ENCODE measurements at regions of chr12 and their contacts with region 1.

Region 1: GRCh38 chr12:124453419-124454351 is 113.7 kb downstream of the NCOR2 start:
- DNase-seq: peak; percentile 90 to 93
- ATAC-seq: peak; percentile 76 to 88 (median 84)
- H3K4me3 ChIP-seq: peak overlapping the region in 6 of 10 donors; percentile 16 to 31 (median 25)
- H3K27ac ChIP-seq: peak overlapping the region; percentile 61 to 95 (median 88)
- H3K4me1 ChIP-seq: peaks cover 34 to 77% (median 72%) of the 10 kb centered on the region in 9 donors
- H3K27me3 ChIP-seq: no peaks in the 10 kb centered on the region
- CTCF ChIP-seq: peak in 4 of 9 donors; percentile 10 to 39 (median 29)

Region 2: GRCh38 chr12:124369055-124369900 is 84.4 kb before region 1 on chr12:
- intact Hi-C with region 1: loop called in 1 of 10 experiments (anchors 5 kb)
- DNase-seq: peak; percentile 91 to 94
- ATAC-seq: peak; percentile 83 to 93 (median 88)
- H3K4me3 ChIP-seq: peak overlapping the region in 2 of 10 donors; percentile 4 to 18
- H3K27ac ChIP-seq: peak overlapping the region; percentile 81 to 96 (median 91)
- H3K4me1 ChIP-seq: peaks cover 45 to 83% (median 66%) of the 10 kb centered on the region in 9 donors
- H3K27me3 ChIP-seq: no peaks in the 10 kb centered on the region
- CTCF ChIP-seq: peak; percentile 17 to 69 (median 51)

Region 3: DNA sequence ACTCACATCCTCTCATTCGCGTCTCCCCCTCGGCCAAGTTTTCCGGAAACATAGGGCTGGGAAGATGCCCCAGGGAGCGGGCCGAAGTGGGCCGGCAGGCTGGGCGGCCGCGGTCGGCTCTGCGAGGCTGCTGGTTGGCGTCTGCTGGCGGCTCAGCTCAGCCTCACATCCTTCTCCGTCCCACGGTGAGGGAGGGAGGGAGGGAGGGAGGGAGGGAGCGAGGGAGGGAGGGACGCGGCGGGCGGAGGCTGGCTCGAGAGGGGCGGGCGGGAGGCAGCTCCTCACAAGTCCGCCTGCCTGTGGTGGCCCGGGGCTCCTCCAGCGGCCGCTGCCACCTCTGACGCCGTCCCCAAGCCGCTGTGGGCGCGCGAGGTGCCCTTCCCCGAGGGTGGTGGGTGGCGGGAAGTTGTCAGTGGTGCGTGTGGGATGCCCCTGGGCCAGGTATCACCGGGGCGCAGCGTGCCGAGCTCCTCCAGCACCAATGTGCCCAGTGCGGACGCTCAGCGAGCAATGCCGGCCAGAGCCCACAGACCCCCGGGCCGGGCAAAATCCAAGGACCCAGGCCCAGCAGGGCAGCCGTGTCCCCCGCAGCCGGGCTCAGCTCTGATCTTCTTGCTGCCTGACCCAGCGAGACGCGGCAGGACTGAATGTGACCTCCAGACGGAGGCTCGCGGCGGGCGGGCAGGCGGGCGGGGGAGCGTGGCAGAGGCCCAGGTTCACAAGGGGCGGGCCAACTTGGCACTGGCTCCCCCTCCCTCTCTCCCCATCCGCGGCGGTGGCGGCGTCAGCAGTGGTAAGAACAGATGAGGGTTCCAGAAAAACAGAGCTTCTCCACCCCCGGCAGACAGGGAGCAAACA is 64.8 kb before region 1 on chr12:
- intact Hi-C with region 1: loop called in 2 of 10 experiments (anchors 5 to 10 kb)
- DNase-seq: peak; percentile 86 to 89
- ATAC-seq: peak; percentile 53 to 71 (median 60)
- H3K4me3 ChIP-seq: peak overlapping the region; percentile 41 to 74 (median 59)
- H3K27ac ChIP-seq: peak overlapping the region; percentile 88 to 99 (median 97)
- H3K4me1 ChIP-seq: peaks cover 61 to 100% (median 89%) of the 10 kb centered on the region in 9 donors
- H3K27me3 ChIP-seq: no peaks in the 10 kb centered on the region
- CTCF ChIP-seq: peak in 3 of 9 donors; percentile 8 to 32 (median 25)

Region 4: DNA sequence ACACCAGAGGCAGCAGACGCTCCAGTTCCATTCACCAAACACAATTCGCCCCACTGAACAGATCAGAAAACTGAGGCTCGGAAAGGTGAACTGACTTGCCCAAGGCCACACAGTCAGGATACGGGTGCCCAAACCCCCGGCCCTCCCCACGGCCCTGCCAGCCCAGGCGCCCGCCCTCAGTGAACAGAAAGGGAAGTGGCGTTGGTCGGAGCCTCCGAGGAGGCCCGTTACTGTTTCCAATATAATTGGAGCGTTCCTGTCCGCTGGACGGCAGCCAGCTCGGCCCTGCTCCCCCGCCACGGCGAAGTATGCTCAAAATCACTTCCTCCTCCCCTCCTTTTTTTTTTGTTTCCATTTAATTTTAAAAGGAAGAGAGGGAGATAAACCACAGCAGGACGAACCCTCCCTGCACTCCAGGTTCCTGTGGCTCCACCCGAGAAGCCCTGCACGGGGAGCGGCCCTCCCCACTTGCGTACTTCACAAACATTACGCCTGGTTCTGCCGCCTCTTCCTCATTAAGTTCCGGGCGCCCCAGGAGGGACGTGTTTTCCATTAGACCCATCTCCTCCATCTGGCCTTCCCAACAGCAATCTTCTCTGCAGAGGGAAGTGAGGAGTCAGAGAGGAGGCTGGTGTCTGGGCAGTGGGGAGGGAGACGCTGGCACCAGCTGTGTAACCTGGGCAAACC is 52.6 kb after region 1 on chr12:
- intact Hi-C with region 1: loop called in 3 of 10 experiments (anchors 5 to 10 kb)
- DNase-seq: peak; percentile 86 to 89
- ATAC-seq: peak in 7 of 8 donors; percentile 38 to 79 (median 59)
- H3K4me3 ChIP-seq: peak overlapping the region in 6 of 10 donors; percentile 5 to 26 (median 22)
- H3K27ac ChIP-seq: peak overlapping the region; percentile 2 to 93 (median 86)
- H3K4me1 ChIP-seq: peaks cover 36 to 97% (median 86%) of the 10 kb centered on the region in 9 donors
- H3K27me3 ChIP-seq: no peaks in the 10 kb centered on the region
- CTCF ChIP-seq: no peak

Region 5: GRCh38 chr12:124599074-124599999 is 145.7 kb after region 1 on chr12:
- intact Hi-C with region 1: no loop called
- DNase-seq: no peak
- ATAC-seq: no peak
- H3K4me3 ChIP-seq: no peak overlapping the region
- H3K27ac ChIP-seq: no peak overlapping the region
- H3K4me1 ChIP-seq: peaks cover 0 to 10% (median 0%) of the 10 kb centered on the region in 9 donors
- H3K27me3 ChIP-seq: no peaks in the 10 kb centered on the region
- CTCF ChIP-seq: peak in 1 of 9 donors; percentile 6